ENCODE measurements at regions of chr19 and their contacts with region 1.

Region 1: DNA sequence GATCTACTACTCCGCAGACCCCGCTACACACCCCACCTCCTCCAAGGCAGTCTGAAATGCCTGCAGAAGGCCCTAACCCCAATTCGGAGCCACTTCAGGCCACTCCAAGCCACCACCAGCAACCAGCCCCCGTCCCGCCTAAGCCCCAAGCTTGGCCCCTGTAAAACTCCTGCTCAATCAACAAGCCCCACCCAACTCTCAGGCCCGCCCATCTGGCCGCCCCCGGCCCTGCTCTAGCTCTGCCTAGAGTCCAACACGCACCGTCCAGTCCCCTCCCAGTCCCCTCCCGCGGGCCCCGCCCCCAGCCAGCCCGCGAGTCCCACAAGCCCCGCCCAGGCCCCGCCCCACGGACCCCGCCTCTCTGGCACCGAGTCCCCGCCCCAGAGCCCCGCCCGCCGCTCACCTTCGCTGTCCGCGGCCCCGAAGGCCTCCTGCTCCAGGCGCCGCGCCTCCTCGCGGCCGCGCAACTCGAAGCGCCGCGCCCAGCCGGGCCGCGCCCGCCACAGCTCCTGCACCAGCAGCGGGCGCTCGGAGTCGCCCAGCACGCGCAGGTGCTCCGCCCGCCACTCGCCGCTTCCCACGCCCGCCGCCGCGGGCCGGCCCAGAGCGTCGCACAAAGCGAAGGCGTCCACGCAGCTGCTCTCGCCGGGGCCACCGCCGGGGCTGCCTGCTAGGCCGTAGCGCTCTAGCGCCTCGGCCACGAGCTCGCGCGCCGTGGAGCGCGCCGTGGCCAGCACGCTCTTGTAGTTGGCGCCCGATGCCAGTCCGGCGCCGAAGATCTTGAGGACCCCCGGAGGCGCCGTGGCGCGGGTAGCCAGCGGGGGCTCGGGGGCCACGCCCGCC is 1.6 kb downstream of the RASIP1 start:
- DNase-seq: peak; percentile 99
- H3K4me3 ChIP-seq: peak overlapping the region; percentile 47
- H3K27ac ChIP-seq: no peak overlapping the region
- H3K4me1 ChIP-seq: no peaks in the 10 kb centered on the region
- H3K27me3 ChIP-seq: peaks cover 5% of the 10 kb centered on the region
- CTCF ChIP-seq: no peak

Region 2: DNA sequence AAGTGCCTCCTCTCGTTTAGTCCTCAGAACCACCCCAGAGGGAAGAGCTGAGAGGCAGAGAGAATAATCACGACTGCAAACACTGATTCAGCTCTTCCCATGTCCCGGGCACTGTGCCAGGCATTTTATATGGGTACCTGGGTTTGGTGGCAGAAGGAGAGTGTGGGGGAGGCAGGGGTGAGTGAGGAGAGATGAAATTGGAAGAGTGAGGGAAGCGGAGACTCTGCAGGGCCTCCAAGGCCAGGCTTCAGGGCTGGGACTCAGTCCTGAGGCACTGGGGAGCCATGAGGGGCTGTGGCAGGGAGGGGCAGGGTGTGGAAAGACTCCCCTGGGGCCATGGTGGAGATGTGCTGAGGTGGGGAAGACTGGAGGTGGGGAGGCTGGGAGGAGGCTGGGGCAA is 365.9 kb before region 1 on chr19:
- intact Hi-C with region 1: no loop called
- DNase-seq: peak; percentile 70
- H3K4me3 ChIP-seq: no peak overlapping the region
- H3K27ac ChIP-seq: no peak overlapping the region
- H3K4me1 ChIP-seq: peaks cover 3% of the 10 kb centered on the region
- H3K27me3 ChIP-seq: no peaks in the 10 kb centered on the region
- CTCF ChIP-seq: no peak

Region 3: DNA sequence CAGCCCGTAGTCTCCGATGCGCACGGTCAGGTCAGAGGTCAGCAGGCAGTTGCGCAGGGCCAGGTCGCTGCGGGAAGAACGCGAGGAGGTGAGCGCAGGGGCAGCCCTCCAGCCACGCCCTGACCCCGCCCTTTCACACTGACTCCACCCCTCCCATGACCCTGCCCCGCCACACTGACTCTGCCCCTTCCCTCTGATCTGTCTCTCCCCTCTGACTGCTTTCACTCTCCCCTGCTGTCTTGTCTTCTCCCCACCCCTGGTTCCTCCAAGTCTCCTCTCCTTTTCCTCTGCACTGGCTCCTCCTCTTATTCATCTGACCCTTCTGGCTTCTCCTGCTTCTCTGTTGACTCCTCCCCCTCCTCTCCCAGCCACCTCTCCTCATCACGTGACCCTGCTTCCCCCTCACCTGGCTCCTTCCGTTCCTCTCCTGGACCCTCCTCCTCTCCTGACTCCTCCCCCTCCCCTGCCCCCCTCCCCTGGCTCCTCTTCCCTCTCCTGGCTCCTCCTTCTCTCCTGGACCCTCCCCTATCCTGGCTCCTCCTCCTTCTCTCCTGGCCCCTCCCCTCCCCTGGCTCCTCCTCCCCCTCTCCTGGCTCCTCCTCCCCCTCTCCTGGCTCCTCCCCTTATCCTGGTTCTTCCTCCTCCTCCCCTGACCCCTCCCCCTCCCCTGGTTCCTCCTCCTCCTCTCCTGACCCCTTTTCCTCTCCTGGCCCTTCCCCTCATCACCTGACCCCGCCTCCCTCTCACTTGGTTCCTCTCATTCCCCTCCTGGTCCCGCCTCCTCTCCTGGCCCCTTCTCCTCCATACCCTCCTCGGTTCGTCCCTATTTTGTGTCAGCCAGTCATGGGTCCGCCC is 237.1 kb before region 1 on chr19:
- intact Hi-C with region 1: no loop called
- DNase-seq: peak; percentile 89
- H3K4me3 ChIP-seq: peak overlapping the region; percentile 22
- H3K27ac ChIP-seq: peak overlapping the region; percentile 17
- H3K4me1 ChIP-seq: no peaks in the 10 kb centered on the region
- H3K27me3 ChIP-seq: peaks cover 17% of the 10 kb centered on the region
- CTCF ChIP-seq: no peak

Region 4: GRCh38 chr19:48674921-48675824 is 63.6 kb before region 1 on chr19:
- intact Hi-C with region 1: loop called (anchors 5 kb)
- DNase-seq: peak; percentile 87
- H3K4me3 ChIP-seq: no peak overlapping the region
- H3K27ac ChIP-seq: no peak overlapping the region
- H3K4me1 ChIP-seq: peaks cover 3% of the 10 kb centered on the region
- H3K27me3 ChIP-seq: no peaks in the 10 kb centered on the region
- CTCF ChIP-seq: peak; percentile 84

Region 5: DNA sequence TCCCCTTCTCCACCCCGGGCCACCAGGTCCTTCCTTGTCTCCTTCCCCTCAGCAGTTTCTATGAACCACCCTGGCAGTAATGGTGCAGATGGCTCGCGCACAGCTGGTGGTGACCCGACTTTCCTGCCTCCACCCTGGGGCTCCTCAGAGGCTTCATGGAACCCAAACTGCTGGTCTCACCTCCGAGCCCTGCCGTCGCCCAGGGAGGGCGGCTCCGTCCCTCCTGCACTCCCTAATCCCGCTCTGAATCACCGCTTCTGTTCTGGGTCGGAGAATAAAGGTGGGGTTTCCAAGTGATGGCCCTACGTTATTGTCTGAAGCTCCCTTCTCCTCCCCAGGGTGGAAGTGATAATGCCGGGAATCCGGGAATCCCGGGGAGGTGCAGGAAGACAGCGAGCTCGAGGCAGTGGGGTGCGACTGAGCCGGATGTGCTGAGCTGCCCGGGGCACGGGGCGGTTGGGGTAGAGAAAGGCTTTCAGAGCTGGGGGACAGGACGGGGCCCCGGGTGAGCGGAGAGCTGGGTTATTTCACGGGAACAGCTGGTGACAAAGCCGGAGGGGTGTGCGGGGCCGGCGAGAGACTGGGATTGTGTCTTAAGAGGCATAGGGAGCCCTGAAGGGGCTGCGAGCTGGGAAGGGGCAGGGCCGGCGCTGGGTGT is 42.3 kb before region 1 on chr19:
- intact Hi-C with region 1: no loop called
- DNase-seq: peak; percentile 46
- H3K4me3 ChIP-seq: peak overlapping the region; percentile 57
- H3K27ac ChIP-seq: peak overlapping the region; percentile 92
- H3K4me1 ChIP-seq: no peaks in the 10 kb centered on the region
- H3K27me3 ChIP-seq: no peaks in the 10 kb centered on the region
- CTCF ChIP-seq: no peak

Region 6: DNA sequence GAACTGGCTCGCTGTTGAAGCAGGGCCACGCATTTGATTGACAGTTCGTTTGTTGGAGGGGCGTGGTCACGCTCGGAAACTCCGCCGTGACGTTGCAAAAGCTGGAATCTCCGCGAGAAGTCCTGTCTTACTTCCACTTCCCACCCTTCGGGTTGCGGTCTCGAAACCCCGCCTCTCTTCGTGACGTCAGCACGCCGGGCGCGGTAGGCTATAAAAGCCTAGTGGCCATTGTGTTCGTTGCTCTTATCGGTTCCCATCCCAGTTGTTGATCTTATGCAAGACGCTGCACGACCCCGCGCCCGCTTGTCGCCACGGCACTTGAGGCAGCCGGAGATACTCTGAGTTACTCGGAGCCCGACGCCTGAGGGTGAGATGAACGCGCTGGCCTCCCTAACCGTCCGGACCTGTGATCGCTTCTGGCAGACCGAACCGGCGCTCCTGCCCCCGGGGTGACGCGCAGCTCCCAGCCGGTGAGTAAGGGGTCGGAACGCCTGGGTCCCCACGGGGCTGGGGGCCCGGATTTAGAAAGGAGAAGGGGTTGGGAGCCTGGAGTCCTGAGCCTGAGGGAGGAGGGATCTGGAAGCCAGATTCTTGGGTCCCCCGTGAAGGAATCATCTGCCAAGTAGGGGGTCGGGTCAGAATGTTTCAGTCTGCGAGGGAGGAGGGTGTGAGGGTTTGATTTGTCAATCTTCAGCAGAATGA is 133.6 kb after region 1 on chr19 and contains the start of gene PPP1R15A:
- intact Hi-C with region 1: no loop called
- DNase-seq: peak; percentile 99
- H3K4me3 ChIP-seq: peak within 1 kb of the TSS; percentile 63
- H3K27ac ChIP-seq: peak within 1 kb of the TSS; percentile 97
- H3K4me1 ChIP-seq: peaks cover 15% of the 10 kb centered on the region
- H3K27me3 ChIP-seq: no peaks in the 10 kb centered on the region
- CTCF ChIP-seq: no peak
- total RNA-seq, gene PPP1R15A: 23.9 to 33.3 TPM